Mammary epithelial cell (primary cell): ENCODE measurements at regions of chr4 and their contacts with region 1.

Region 1: GRCh38 chr4:168585168-168586091 is 88.6 kb downstream of the PALLD start:
- DNase-seq: peak; percentile 83
- H3K4me3 ChIP-seq: no peak overlapping the region
- H3K27ac ChIP-seq: peak overlapping the region; percentile 99
- H3K4me1 ChIP-seq: peaks cover 66% of the 10 kb centered on the region
- H3K27me3 ChIP-seq: no peaks in the 10 kb centered on the region
- CTCF ChIP-seq: peak; percentile 73 to 87

Region 2: DNA sequence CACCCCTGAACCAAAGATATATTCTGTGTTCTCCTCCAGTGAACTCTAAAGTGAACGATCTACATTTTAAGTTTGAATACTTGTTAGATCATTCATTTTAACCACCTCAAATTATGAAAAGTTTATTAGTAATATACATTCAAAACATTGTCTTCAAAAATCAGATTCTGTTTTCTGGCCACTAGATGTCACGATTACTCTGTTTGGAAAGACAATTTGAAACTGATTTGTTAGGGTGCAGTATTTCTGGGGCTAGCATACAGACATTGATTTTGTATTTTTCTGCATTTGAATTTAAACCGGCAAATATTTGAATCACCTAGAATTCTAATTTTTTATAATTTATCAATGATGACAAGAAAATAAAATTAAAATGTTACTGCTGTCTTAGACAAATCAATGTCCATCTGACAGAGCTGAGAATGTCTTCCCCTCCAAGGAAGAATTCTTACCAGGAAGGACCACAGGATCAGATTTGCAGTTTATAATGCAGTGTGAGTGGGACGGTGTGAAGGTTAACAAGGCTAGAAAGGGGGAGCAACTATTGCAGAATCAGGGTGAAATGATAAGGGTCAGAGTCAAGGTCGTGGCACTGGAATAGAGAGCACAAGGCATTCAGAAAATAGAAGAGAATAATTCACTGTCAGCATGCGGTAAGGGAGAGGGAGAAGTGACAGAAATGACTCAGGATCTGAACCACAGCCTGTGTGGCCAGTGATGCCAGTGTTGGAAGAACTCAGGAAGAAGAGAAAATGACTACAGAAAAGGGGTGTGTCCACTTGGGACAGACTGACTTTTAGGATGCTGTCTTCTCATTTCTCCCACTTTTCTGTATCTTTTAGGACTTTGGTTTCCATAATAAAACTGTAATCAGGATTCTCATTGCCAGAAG is 401.5 kb before region 1 on chr4:
- CTCF ChIA-PET with region 1: no interaction called
- dilution Hi-C with region 1: no loop called
- in situ Hi-C with region 1: no loop called
- intact Hi-C with region 1: loop called (anchors 1 kb)
- DNase-seq: peak; percentile 23
- H3K4me3 ChIP-seq: no peak overlapping the region
- H3K27ac ChIP-seq: no peak overlapping the region
- H3K4me1 ChIP-seq: no peaks in the 10 kb centered on the region
- H3K27me3 ChIP-seq: no peaks in the 10 kb centered on the region
- CTCF ChIP-seq: peak; percentile 47 to 64

Region 3: DNA sequence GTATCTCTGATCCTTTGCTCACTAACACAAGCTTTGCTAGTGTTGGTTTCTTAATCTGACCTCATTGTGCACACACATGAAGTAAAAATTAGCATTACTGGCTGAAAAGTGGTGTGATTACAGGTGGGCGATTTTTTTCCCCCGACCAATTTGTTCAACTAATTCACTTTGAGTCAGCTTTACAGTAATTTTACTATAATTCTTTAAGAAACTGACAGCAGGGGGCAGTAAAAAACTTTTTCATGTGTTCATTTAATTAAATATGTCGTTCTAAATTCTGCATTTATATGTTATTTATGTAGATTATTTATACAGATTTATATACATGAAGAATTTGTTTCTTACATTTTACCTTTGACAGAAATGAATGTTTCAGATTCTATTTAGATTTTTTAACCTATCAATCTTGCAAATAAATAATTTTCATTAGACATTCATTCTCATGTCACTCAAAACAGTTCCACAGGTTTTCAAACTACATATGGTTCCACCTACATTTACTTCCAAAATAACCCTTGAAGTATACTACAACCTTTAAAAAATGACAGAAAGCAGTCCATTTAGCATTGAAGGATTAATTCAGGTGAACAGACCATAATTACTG is 71.1 kb before region 1 on chr4:
- CTCF ChIA-PET with region 1: no interaction called
- dilution Hi-C with region 1: no loop called
- in situ Hi-C with region 1: no loop called
- intact Hi-C with region 1: loop called (anchors 2 kb)
- DNase-seq: peak; percentile 24
- H3K4me3 ChIP-seq: no peak overlapping the region
- H3K27ac ChIP-seq: no peak overlapping the region
- H3K4me1 ChIP-seq: no peaks in the 10 kb centered on the region
- H3K27me3 ChIP-seq: no peaks in the 10 kb centered on the region
- CTCF ChIP-seq: peak; percentile 31 to 36

Region 4: GRCh38 chr4:168551945-168552695 is 33.3 kb before region 1 on chr4:
- CTCF ChIA-PET with region 1: no interaction called
- dilution Hi-C with region 1: no loop called
- in situ Hi-C with region 1: no loop called
- intact Hi-C with region 1: no loop called
- DNase-seq: no peak
- H3K4me3 ChIP-seq: no peak overlapping the region
- H3K27ac ChIP-seq: peak overlapping the region; percentile 93
- H3K4me1 ChIP-seq: peaks cover 24% of the 10 kb centered on the region
- H3K27me3 ChIP-seq: no peaks in the 10 kb centered on the region
- CTCF ChIP-seq: no peak

Region 5: DNA sequence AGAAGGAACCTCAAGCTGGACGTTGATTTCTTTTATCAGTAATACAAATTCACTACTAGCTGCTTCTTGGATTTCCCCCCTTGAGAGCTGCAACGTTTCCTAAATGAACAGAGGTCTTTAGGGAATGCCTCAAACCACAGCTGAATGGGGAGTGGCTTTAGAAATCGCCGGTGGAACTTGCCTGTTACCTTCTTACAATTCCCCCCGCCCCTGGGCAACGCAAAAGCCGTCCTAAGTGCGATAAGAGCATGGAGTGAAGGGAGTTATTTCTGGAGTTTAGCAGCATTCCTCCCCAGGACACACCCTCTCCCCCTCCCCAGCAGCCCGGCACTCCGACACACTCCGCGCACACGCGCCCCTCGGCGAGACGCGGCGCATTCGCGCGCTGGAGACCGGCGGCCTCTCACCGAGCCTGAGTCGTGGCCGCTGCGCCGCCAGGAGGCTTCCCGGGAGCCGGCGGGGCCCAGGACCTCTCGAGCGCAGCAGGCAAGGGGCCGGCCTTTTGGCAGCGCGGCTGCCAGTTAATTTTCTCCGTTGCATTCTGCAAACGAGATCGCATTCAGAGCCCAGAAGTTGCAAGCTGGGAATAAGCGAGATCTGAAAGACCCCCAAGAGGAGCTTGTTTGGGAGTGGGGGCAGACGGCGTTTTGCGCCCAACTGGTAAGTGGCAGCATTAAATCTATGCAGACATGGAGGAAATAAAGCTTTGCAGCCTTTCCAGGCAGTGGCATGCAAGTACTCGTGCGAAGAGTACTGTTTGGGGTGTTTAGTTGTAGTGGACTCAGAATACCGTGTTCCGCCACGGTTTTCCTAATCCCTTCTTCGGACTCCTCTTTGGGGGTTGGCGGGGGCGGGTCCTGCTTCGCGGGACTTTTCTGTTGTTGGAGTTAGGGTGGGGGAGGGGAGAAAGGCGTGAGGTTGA is 46.1 kb after region 1 on chr4:
- CTCF ChIA-PET with region 1: interaction called, 3 read pairs
- dilution Hi-C with region 1: no loop called
- in situ Hi-C with region 1: no loop called
- intact Hi-C with region 1: loop called (anchors 1 kb)
- DNase-seq: peak; percentile 80
- H3K4me3 ChIP-seq: peak overlapping the region; percentile 56 to 62 (median 61)
- H3K27ac ChIP-seq: peak overlapping the region; percentile 66
- H3K4me1 ChIP-seq: peaks cover 48% of the 10 kb centered on the region
- H3K27me3 ChIP-seq: no peaks in the 10 kb centered on the region
- CTCF ChIP-seq: peak; percentile 19 to 53

Region 6: GRCh38 chr4:168710353-168710946 is 125.0 kb after region 1 on chr4:
- CTCF ChIA-PET with region 1: interaction called, 5 read pairs
- dilution Hi-C with region 1: no loop called
- in situ Hi-C with region 1: no loop called
- intact Hi-C with region 1: loop called (anchors 1 kb)
- DNase-seq: peak; percentile 54
- H3K4me3 ChIP-seq: no peak overlapping the region
- H3K27ac ChIP-seq: no peak overlapping the region
- H3K4me1 ChIP-seq: peaks cover 33% of the 10 kb centered on the region
- H3K27me3 ChIP-seq: no peaks in the 10 kb centered on the region
- CTCF ChIP-seq: peak; percentile 49 to 74

Region 7: DNA sequence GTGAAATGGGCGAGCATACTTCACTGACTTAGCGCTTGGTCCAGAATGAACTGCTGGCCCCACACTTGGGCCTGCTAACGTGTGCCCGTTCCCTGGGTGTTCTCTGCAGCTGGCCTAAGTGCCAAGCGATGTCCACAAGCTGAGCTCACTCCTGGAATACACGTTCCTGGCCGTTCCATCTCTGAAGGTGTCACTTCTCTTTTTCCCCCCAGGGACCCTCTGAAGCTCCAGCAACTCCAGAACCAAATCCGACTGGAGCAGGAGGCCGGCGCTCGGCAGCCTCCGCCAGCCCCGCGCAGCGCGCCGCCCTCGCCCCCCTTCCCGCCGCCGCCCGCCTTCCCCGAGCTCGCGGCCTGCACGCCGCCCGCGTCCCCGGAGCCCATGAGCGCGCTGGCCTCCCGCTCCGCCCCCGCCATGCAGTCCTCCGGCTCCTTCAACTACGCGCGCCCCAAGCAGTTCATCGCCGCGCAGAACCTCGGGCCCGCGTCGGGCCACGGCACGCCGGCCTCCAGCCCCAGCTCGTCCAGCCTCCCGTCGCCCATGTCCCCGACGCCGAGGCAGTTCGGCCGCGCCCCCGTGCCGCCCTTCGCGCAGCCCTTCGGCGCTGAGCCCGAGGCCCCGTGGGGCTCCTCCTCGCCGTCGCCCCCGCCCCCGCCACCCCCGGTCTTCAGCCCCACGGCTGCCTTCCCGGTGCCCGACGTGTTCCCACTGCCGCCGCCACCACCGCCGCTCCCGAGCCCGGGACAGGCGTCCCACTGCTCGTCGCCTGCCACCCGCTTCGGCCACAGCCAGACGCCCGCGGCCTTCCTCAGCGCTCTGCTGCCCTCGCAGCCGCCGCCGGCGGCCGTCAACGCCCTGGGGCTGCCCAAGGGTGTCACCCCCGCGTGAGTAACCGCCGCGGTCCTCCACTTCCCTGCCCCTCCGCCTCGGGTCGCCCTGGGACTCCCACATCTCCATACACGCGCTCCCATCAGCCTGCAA is 292.4 kb after region 1 on chr4:
- CTCF ChIA-PET with region 1: no interaction called
- dilution Hi-C with region 1: no loop called
- in situ Hi-C with region 1: no loop called
- intact Hi-C with region 1: loop called (anchors 5 kb)
- DNase-seq: peak; percentile 48
- H3K4me3 ChIP-seq: no peak overlapping the region
- H3K27ac ChIP-seq: no peak overlapping the region
- H3K4me1 ChIP-seq: peaks cover 26% of the 10 kb centered on the region
- H3K27me3 ChIP-seq: no peaks in the 10 kb centered on the region
- CTCF ChIP-seq: no peak